K562 (cell line): ENCODE measurements at regions of chr1 and their contacts with region 1.

Region 1: DNA sequence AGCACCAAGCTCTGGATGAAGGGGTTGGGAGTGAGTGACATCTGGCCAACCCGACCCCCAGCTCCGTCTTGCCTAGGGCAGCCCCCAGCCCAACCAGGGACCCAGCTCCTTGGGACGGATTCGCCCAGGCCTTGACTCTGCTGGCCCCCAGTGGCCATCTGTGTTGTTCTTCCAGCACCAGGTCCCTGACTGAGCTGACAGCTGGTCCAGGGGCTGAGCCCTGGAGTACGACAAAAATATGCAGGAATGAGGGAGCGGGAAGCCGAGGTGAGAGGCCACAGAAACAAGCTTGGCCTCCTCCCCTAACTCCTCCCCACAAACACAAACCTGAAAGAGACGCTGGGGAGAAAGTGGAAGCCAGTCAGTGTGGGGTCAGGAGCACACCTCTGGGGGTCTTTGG is 55.0 kb upstream of the PAX7 start:
- DNase-seq: peak; percentile 78 to 81 (median 80)
- ATAC-seq: peak; percentile 89
- H3K4me3 ChIP-seq: no peak overlapping the region
- H3K27ac ChIP-seq: no peak overlapping the region
- H3K4me1 ChIP-seq: no peaks in the 10 kb centered on the region; a peak in 1 of 5 replicates
- H3K27me3 ChIP-seq: peaks cover 5 to 21% of the 10 kb centered on the region in 2 experiments; a peak in 3 of 5 replicates
- CTCF ChIP-seq: peak; percentile 89 to 93 (median 90)
- EP300 ChIP-seq: no peak
- POLR2A ChIP-seq: no peak
- RAD21 ChIP-seq: peak; percentile 88 to 92

Region 2: GRCh38 chr1:17933971-17934370 is 641.6 kb before region 1 on chr1:
- CTCF ChIA-PET with region 1: no interaction called
- POLR2A ChIA-PET with region 1: no interaction called
- in situ Hi-C with region 1: loop called (anchors 10 kb)
- intact Hi-C with region 1: no loop called
- DNase-seq: no peak
- ATAC-seq: no peak
- H3K4me3 ChIP-seq: no peak overlapping the region
- H3K27ac ChIP-seq: no peak overlapping the region
- H3K4me1 ChIP-seq: no peaks in the 10 kb centered on the region
- H3K27me3 ChIP-seq: peaks cover 0 to 7% of the 10 kb centered on the region in 2 experiments; a peak in 1 of 5 replicates
- CTCF ChIP-seq: no peak
- EP300 ChIP-seq: no peak
- POLR2A ChIP-seq: no peak
- RAD21 ChIP-seq: no peak

Region 3: DNA sequence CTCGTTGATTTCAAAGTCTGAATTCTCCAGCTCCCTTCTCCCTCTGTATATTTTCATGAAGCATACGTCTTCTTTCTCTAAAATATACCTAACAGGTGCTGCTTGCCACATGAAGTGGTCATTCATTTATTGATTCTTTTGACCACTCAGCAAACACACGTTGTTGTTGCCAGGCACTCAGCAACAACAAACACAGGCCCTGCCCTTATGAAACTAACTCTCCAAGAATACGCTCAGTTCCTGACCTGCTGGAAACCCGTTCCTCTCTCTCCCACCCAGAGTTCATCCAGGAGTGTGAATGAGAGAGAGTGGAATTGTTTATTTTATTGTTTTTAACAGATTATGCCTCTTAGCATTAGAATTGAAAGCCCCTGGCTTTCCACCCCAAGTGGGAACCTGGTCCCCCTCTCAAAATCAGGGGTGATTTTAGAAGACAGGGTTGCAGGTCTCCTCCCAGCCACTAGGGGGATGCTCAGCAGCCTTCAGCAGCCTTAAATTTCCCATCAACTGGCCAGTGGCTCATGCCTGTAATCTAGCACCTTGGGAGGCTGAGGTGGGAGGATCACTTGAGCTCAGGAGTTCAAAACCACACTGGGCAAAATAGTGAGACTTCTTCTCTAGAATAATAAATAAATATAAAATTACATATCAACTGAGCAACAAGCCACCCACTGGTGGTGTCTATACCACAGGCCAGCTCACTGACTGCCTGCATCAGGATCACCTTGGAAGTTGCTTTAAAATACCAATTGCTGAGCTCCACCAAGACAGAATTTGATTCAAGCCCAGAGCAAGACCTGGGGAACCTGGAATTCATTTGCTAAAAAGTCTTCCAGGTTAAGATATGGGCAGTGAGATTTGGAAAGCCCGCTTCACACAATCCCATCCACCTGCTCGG is 275.9 kb before region 1 on chr1:
- CTCF ChIA-PET with region 1: no interaction called
- POLR2A ChIA-PET with region 1: interaction called, 5 read pairs
- in situ Hi-C with region 1: no loop called
- intact Hi-C with region 1: loop called (anchors 10 kb)
- DNase-seq: peak; percentile 47 to 80 (median 76)
- ATAC-seq: peak; percentile 83
- H3K4me3 ChIP-seq: no peak overlapping the region
- H3K27ac ChIP-seq: no peak overlapping the region
- H3K4me1 ChIP-seq: no peaks in the 10 kb centered on the region
- H3K27me3 ChIP-seq: peaks cover 0 to 9% of the 10 kb centered on the region in 2 experiments; a peak in 1 of 5 replicates
- CTCF ChIP-seq: peak; percentile 76 to 88 (median 86)
- EP300 ChIP-seq: no peak
- POLR2A ChIP-seq: no peak
- RAD21 ChIP-seq: peak; percentile 35 to 66

Region 4: GRCh38 chr1:18322368-18323032 is 253.1 kb before region 1 on chr1:
- CTCF ChIA-PET with region 1: interaction called, 3 read pairs
- POLR2A ChIA-PET with region 1: no interaction called
- in situ Hi-C with region 1: no loop called
- intact Hi-C with region 1: loop called (anchors 10 kb)
- DNase-seq: peak; percentile 31 to 62 (median 55)
- ATAC-seq: peak; percentile 72
- H3K4me3 ChIP-seq: no peak overlapping the region
- H3K27ac ChIP-seq: no peak overlapping the region
- H3K4me1 ChIP-seq: no peaks in the 10 kb centered on the region
- H3K27me3 ChIP-seq: peaks cover 0 to 52% of the 10 kb centered on the region in 2 experiments; a peak in 3 of 5 replicates
- CTCF ChIP-seq: peak; percentile 56 to 69 (median 63)
- EP300 ChIP-seq: no peak
- POLR2A ChIP-seq: no peak
- RAD21 ChIP-seq: 0 out of 4 replicates have a peak, but pooled peaks of 1 of the 2 experiments have one; percentile 7

Region 5: DNA sequence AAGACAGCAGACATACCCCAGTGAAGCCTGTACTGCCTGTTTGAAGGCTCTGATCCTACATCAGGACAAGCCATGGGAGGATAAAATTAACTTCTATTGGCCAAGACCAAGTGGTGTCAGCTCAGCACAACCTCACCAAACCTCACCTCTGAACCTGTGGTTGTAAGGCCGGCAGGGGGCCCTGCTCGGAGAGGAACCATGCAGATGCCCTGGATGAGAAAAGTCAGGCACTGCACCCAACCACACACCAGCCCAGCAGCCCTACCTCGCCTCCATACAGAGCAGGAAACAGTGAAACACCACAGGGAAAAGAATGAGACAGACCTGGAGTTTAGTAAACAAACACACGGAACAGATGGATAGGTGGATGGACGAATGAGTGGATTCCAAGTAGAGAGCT is 14.9 kb before region 1 on chr1:
- CTCF ChIA-PET with region 1: no interaction called
- POLR2A ChIA-PET with region 1: no interaction called
- in situ Hi-C with region 1: no loop called
- intact Hi-C with region 1: no loop called
- DNase-seq: peak in 2 of 4 experiments; percentile 22 to 40
- ATAC-seq: peak; percentile 74
- H3K4me3 ChIP-seq: no peak overlapping the region
- H3K27ac ChIP-seq: no peak overlapping the region
- H3K4me1 ChIP-seq: peaks cover 0 to 3% of the 10 kb centered on the region in 2 experiments; a peak in 1 of 5 replicates
- H3K27me3 ChIP-seq: peaks cover 19 to 54% of the 10 kb centered on the region in 2 experiments
- CTCF ChIP-seq: peak; percentile 32 to 43 (median 37); a peak in 3 of 6 replicates
- EP300 ChIP-seq: no peak
- POLR2A ChIP-seq: no peak
- RAD21 ChIP-seq: no peak

Region 6: DNA sequence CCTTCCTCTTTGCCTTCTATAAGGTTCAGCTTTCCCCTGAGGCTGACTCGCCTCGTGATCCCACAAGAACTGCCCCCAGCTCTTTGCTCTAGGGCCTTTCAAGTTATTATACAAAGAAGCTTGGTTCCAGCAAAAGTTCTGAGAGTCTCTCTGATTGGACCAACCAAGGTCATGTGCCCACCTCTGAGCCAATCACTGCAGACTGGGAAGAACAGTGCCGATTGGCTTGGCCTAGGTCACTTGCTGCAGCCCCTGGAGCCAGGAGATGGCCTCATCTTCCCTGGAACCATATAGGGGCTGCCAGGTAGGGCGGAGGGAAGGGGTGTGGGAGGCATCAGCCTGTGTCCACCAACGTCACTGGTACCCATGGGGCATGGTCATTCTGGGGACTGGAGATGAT is 261.0 kb after region 1 on chr1:
- CTCF ChIA-PET with region 1: no interaction called
- POLR2A ChIA-PET with region 1: no interaction called
- in situ Hi-C with region 1: no loop called
- intact Hi-C with region 1: no loop called
- DNase-seq: peak; percentile 34 to 87 (median 84)
- ATAC-seq: peak; percentile 97
- H3K4me3 ChIP-seq: no peak overlapping the region
- H3K27ac ChIP-seq: no peak overlapping the region
- H3K4me1 ChIP-seq: no peaks in the 10 kb centered on the region
- H3K27me3 ChIP-seq: peaks cover 16 to 66% of the 10 kb centered on the region in 2 experiments
- CTCF ChIP-seq: no peak
- EP300 ChIP-seq: no peak
- POLR2A ChIP-seq: no peak
- RAD21 ChIP-seq: no peak